ENCODE measurements at regions of chr4 and their contacts with region 1.

Region 1: GRCh38 chr4:153344131-153345010 is at the start of gene MND1:
- DNase-seq: peak; percentile 84 to 94 (median 93)
- ATAC-seq: peak; percentile 96 to 97
- H3K4me3 ChIP-seq: peak within 1 kb of the TSS; percentile 86
- H3K27ac ChIP-seq: no peak within 1 kb of the TSS
- H3K4me1 ChIP-seq: no peaks in the 10 kb centered on the region
- H3K27me3 ChIP-seq: no peaks in the 10 kb centered on the region
- total RNA-seq, gene MND1: 0.41 to 0.54 TPM in 2 of 4 donors, not detected in the others

Region 2: DNA sequence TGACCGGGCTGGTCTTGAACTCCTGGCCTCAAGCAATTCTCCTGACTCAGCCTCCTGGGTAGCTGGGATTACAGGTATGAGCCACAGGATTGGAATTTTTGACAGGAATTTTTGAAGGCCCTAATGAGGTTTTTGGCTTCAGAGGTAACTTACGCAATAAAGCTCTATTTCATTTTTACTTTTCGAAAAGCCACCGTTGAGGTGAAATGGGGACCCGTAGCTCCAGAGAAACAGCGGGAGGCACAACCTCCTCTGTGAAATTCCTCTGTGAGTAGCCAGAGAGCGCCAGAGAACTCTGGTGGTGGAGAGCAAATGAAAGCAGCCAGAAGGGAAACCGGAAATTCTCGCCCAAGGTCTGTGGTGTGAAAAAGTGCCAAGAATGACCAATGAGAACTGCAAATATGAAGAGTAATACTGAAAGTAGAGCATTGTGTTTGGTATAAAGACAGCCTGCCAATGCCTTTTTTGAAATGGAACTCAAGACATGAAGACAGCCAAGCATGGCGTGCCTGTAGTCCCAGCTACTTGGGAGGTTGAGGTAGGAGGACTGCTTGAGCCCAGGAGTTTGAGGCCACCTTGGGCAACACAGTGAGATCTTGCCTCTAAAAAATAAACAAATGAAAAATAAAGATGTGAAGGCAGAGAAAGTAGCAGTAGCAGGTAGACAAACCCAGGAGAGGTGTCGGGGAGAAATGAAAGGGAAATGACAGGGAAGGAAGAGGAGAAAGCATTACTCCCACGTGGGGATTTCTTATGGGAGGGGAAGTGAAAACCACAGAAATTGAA is 88.8 kb after region 1 on chr4:
- intact Hi-C with region 1: loop called in 1 of 4 experiments (anchors 10 kb)
- DNase-seq: peak; percentile 46 to 59 (median 58)
- ATAC-seq: peak; percentile 82 to 83
- H3K4me3 ChIP-seq: no peak overlapping the region
- H3K27ac ChIP-seq: no peak overlapping the region
- H3K4me1 ChIP-seq: no peaks in the 10 kb centered on the region
- H3K27me3 ChIP-seq: no peaks in the 10 kb centered on the region

Region 3: DNA sequence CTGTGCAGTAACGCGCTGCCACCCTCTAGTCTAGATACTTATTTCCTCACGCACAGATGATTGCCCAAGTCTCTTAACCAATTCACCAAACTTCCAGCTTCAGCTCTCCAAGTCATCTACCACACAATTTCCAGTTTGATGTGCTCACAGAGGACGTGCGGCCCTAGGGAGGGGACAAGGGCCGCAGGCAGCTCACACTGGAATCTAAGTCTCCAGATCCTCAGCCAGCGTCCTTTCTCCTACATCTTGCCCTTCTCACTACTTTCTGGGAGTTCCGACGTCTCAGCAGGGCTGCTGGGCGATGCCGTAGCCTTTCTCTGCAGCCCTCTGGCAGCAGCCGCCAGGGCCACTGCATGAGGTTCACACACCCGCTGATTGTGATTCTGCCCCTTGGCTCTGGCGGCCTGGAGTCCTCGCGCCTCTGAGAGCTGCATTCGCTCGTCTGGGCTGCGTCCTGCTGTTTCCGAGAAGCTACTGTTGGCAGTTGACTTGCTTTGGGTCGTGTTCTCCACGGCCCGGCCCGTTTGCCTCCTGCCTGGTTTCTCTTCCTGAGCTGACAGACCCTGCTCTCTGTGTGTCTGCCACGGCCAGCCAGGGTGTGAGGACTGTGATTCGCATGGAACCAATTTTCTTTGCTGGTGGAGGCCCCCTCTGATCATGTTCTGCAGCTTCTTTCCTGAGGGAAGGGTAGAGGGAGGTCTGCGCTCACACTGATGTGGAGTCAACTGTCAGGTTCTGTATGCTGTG is 107.7 kb after region 1 on chr4:
- intact Hi-C with region 1: loop called in 1 of 4 experiments (anchors 10 kb)
- DNase-seq: peak; percentile 46 to 85 (median 79)
- ATAC-seq: peak; percentile 74 to 75
- H3K4me3 ChIP-seq: no peak overlapping the region
- H3K27ac ChIP-seq: no peak overlapping the region
- H3K4me1 ChIP-seq: no peaks in the 10 kb centered on the region
- H3K27me3 ChIP-seq: no peaks in the 10 kb centered on the region

Region 4: DNA sequence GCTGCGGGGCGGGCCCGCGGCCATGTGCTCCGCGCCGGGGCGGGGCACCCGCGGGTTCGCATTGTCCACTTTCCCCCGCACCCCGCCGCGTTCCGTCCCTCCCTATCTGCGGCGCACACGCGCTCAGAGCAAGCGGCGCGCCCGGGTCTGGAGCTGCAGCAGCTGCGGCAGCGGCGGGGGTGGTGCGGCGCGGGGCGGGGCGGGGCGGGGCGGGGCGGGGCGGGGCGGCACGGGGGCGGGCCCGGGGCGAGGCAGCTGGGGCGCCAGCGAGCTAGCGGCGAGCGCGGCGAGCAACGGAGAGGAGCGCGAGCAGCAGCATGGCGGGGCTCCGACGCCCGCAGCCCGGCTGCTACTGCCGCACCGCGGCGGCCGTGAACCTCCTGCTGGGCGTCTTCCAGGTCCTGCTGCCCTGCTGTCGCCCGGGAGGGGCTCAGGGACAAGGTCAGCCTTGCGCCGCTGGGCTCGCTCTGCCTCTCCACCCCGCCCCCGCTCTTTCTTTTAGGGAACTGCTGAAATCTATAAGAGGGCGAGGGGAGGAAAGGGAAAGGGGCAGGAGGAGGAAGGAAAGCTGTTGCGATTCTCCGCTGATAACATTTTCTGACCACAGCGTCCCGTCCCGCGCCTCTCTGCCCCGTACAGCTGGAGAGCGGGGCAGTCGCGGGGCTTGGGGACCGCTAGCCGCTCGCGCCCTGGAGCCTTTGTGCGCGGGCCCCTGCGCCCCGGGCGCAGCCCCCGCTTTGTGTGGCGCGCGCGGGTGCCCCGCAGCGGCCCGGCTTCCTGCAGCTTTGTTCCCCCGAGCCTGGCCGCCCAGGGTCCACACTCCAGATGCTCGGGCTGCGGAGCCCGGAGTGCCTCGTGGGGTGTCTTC is 121.9 kb after region 1 on chr4 and contains the start of gene TMEM131L:
- intact Hi-C with region 1: loop called in 1 of 4 experiments (anchors 10 kb)
- DNase-seq: peak; percentile 70 to 91 (median 88)
- ATAC-seq: peak; percentile 92 to 93
- H3K4me3 ChIP-seq: peak within 1 kb of the TSS; percentile 75
- H3K27ac ChIP-seq: peak within 1 kb of the TSS; percentile 62
- H3K4me1 ChIP-seq: peaks cover 4% of the 10 kb centered on the region
- H3K27me3 ChIP-seq: no peaks in the 10 kb centered on the region
- total RNA-seq, gene TMEM131L: 9.0 to 13.3 (median 11.3) TPM

Region 5: DNA sequence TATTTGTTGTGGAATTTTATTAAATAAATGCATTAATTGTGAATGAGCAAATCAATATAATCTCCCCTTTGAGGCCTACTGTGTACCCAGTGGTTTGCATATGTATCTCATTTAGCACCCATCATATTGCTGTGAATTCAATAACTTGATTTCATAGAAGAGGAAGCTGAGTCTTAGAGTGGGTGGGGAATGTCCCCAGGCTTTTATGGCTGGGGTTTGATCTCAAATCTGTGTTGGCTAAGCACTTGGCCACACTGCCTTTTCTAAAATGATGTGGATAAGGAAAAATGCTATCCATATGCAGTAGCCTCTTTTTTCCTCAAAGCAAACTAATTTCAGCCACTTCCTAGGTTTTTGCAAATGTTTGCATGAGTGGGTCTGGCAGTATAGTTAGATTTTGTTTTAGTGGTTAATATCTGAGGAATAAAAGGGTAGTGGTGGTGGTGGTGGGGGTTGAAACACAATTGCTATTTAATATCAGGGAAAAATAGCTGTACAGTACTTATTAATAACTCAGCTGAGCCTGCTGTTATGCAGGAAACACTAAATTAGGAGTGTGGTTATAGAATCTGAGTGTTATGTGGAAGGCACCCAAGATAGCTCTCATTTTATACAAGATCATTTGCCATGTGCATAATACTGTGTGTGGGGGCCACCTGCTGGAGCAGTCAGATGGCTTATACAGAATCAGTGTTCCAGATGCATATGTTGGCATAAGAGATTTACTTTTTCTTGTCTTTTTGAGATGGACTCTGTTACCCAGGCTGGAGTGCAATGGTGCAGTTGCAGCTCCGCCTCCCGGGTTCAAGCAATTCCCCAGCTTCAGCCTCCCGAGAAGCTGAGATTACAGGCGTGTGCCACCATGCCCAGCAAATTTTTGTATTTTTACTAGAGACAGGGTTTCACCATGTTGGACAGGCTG is 229.8 kb after region 1 on chr4:
- intact Hi-C with region 1: loop called (anchors 2 to 5 kb)
- DNase-seq: peak; percentile 53 to 88 (median 69)
- ATAC-seq: peak; percentile 85
- H3K4me3 ChIP-seq: no peak overlapping the region
- H3K27ac ChIP-seq: peak overlapping the region; percentile 30
- H3K4me1 ChIP-seq: peaks cover 2% of the 10 kb centered on the region
- H3K27me3 ChIP-seq: no peaks in the 10 kb centered on the region

Region 6: GRCh38 chr4:153750197-153750817 is 405.9 kb after region 1 on chr4:
- intact Hi-C with region 1: loop called in 1 of 4 experiments (anchors 10 kb)
- DNase-seq: peak in 1 of 3 donors; percentile 33
- ATAC-seq: peak; percentile 54 to 77
- H3K4me3 ChIP-seq: no peak overlapping the region
- H3K27ac ChIP-seq: no peak overlapping the region
- H3K4me1 ChIP-seq: no peaks in the 10 kb centered on the region
- H3K27me3 ChIP-seq: no peaks in the 10 kb centered on the region